ENCODE measurements at regions of chr6 and their contacts with region 1.

Region 1: DNA sequence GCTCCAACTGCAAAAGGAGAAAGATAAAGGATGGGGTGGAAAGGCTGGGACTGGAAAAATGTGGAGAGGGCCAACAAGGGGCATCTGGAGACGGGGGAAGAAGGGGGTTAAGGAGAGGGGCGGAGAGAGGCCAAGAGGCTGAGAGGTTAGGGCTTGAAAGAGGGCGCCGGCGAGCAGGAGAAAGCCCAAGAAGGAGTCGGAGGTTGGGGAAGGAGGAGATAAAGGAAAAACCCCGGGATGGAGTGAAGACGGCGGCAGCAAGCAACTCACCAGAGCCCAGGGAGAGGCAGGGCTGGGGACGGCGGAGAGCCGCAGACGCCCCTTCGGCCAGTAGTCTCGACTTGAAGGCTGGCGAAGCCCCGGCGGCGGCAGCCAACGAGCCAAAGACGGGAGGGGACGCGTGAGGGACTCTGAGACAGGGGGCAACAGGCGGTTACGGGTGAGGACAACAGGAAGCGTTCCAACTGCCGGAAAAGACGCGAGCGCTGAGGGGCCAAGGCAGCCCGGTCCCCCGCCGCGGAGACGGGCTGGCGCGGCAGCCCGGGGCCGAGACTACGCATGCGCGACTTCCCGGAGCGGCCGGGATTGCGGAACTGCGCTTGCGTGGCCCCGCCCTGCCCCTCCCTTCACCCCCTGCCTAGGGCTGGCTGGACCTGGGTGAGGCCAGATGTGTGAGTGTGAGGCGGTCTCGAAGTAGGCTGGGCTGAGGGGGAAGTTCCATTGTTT is at the start of gene STK38:
- DNase-seq: peak; percentile 96
- H3K4me3 ChIP-seq: peak within 1 kb of the TSS; percentile 78 to 98 (median 86)
- H3K27ac ChIP-seq: peak within 1 kb of the TSS; percentile 94 to 99 (median 96)
- H3K4me1 ChIP-seq: peaks cover 30 to 50% (median 48%) of the 10 kb centered on the region in 4 donors
- H3K27me3 ChIP-seq: no peaks in the 10 kb centered on the region
- CTCF ChIP-seq: peak in 2 of 3 experiments; percentile 4 to 22
- EP300 ChIP-seq: no peak
- POLR2A ChIP-seq: peak; percentile 96
- total RNA-seq, gene STK38: 32.0 to 44.3 (median 40.3) TPM

Region 2: DNA sequence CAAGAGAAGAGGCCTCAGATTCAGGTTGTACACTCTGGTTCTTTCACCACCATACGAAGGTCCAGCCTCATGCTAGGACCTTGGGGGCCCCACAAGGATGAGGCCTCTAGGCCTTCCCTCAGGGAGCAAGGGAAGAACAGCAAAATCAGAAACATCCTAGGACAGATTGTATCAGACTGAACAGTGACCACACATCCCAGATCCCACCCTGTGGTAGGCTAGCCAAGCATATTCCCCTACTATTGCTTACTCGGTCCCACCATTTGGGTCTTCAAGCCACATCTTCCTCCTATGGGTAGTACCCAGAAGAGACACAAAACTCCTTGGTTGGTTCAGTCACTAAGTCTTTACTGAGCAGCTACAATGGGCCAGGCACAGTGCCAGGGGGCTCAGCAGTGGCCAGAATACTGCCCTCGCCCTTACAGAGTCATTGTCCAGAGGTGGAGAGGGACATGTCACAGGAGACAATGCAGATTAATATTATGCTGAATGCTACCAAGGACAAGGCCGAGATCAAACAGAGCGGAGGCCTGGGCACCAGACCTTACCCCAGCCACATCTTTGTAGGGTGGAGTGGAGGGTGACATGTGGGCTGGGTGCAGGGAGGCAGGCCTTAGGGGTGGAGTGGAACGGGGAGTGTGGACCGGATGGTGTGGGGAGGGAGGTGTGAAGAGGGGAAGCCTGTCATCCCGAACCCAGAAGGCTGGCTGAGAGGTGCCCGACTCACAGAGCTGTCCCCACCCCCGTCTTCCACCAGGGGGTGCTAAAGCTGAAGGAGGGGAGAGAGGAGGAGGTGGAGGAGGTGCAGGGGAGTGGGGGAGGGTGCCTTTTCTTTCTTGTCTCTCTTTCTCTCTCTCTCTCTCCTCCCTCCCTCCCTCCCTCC is 423.6 kb before region 1 on chr6:
- intact Hi-C with region 1: no loop called
- DNase-seq: peak; percentile 96
- H3K4me3 ChIP-seq: peak overlapping the region in 2 of 4 donors; percentile 18 to 21
- H3K27ac ChIP-seq: no peak overlapping the region
- H3K4me1 ChIP-seq: peaks cover 20 to 30% (median 29%) of the 10 kb centered on the region in 4 donors
- H3K27me3 ChIP-seq: peaks cover 0 to 22% (median 0%) of the 10 kb centered on the region in 4 donors
- CTCF ChIP-seq: peak; percentile 69 to 84 (median 76)
- EP300 ChIP-seq: no peak
- POLR2A ChIP-seq: no peak

Region 3: GRCh38 chr6:36373368-36374019 is 173.6 kb before region 1 on chr6:
- intact Hi-C with region 1: no loop called
- DNase-seq: no peak
- H3K4me3 ChIP-seq: no peak overlapping the region
- H3K27ac ChIP-seq: no peak overlapping the region
- H3K4me1 ChIP-seq: no peaks in the 10 kb centered on the region
- H3K27me3 ChIP-seq: peaks cover 0 to 8% (median 0%) of the 10 kb centered on the region in 4 donors
- CTCF ChIP-seq: no peak
- EP300 ChIP-seq: no peak
- POLR2A ChIP-seq: no peak

Region 4: DNA sequence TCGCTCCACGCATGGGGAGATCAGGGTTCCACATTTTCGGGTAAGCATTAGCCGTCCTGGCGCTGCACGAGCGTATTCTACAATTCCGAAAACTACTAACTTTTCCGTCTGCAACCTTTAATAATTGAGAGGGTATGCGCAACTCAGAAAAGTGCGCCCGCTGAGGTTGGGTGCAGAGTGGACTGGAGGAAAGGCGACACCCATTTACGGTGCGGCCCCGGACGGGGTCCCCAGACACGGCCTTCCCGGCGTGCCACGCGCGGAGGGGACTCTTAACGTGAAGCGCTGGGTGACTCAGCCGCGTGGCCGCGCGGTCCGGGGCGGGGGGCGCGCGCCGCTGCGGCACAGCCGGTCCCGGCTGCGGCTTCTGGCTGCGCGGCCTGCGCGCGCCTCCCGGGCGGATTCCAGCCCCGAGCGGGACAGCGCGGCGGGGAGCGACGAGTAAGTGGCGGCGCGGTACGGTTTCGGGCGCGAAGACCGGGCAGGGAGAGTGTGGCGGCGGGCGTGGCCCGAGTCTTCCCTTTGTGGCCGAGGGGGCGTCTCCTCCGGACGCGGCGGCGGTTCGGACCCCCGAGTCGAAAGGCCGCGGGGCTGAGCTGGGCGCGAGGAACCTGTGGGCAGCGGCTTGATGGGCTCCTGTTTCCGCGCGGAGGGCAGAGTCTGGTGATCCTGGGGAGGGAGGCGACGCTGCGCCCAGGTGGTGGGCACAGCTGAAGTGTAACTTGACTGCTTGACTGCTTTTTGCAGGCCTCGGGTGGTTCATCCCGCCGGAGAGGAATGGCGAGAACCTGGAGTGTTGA is 104.2 kb before region 1 on chr6 and contains the starts of genes KCTD20 and PXT1:
- intact Hi-C with region 1: loop called (anchors 5 kb)
- DNase-seq: peak; percentile 96
- H3K4me3 ChIP-seq: peak within 1 kb of the TSS; percentile 95 to 99 (median 96)
- H3K27ac ChIP-seq: peak within 1 kb of the TSS; percentile 96 to 100 (median 98)
- H3K4me1 ChIP-seq: peaks cover 34 to 57% (median 49%) of the 10 kb centered on the region in 4 donors
- H3K27me3 ChIP-seq: no peaks in the 10 kb centered on the region
- CTCF ChIP-seq: peak in 1 of 3 experiments; percentile 12
- EP300 ChIP-seq: no peak
- POLR2A ChIP-seq: peak; percentile 58
- total RNA-seq, gene KCTD20: 47.3 to 78.2 (median 63.0) TPM
- total RNA-seq, gene PXT1: not detected

Region 5: DNA sequence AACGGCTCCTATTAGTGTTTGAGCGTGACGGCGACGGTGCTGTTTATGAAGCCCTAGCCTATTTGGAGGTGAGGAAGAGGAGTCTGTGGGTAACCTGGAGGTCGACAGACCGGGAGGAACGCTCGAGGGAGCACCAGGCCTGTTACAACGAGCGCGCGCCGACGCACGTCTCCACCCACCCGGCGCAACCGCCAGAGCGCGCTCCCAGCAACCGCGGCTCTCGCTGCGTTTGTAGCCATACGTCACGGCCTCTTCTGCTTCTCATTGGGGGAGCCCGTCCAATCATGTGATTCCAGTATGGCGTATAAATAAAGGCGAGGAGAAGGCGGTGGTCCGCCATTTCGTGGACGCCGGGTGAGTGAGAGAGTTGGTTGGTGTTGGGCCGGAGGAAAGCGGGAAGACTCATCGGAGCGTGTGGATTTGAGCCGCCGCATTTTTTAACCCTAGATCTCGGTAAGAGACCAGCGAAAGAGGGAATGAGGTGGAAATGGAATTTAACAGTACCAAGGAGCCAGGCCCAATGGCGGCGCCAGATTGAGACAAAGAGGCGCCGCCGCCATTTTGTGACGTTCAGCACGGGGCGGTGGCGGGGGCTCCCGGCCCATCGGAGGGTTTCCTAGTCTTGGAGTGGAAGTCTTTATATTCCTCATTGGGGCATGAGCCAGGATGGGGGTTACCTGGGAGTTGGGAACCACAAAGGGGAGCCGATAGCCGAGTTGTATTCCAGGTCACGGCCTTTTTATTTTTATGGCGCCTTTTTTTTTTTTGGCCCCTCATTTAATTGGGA is 47.1 kb after region 1 on chr6 and contains the start of gene SRSF3:
- intact Hi-C with region 1: loop called (anchors 5 kb)
- DNase-seq: peak; percentile 99
- H3K4me3 ChIP-seq: peak within 1 kb of the TSS; percentile 75 to 85 (median 78)
- H3K27ac ChIP-seq: peak within 1 kb of the TSS; percentile 92 to 99 (median 96)
- H3K4me1 ChIP-seq: peaks cover 35 to 46% (median 41%) of the 10 kb centered on the region in 4 donors
- H3K27me3 ChIP-seq: no peaks in the 10 kb centered on the region
- CTCF ChIP-seq: peak; percentile 30 to 57 (median 53)
- EP300 ChIP-seq: no peak
- POLR2A ChIP-seq: peak; percentile 100
- total RNA-seq, gene SRSF3: 149 to 226 (median 180) TPM

Measured in esophagus muscularis mucosa (tissue), 4 donors.